ENCODE measurements at regions of chr15 and their contacts with region 1.

Region 1: GRCh38 chr15:60916679-60917460 is 312.2 kb downstream of the RORA start:
- DNase-seq: peak; percentile 75 to 87 (median 82)
- ATAC-seq: peak; percentile 94
- H3K4me3 ChIP-seq: no peak overlapping the region
- H3K27ac ChIP-seq: peak overlapping the region; percentile 14
- H3K4me1 ChIP-seq: peaks cover 0 to 12% of the 10 kb centered on the region in 2 donors
- H3K27me3 ChIP-seq: no peaks in the 10 kb centered on the region
- CTCF ChIP-seq: peak; percentile 76 to 80

Region 2: DNA sequence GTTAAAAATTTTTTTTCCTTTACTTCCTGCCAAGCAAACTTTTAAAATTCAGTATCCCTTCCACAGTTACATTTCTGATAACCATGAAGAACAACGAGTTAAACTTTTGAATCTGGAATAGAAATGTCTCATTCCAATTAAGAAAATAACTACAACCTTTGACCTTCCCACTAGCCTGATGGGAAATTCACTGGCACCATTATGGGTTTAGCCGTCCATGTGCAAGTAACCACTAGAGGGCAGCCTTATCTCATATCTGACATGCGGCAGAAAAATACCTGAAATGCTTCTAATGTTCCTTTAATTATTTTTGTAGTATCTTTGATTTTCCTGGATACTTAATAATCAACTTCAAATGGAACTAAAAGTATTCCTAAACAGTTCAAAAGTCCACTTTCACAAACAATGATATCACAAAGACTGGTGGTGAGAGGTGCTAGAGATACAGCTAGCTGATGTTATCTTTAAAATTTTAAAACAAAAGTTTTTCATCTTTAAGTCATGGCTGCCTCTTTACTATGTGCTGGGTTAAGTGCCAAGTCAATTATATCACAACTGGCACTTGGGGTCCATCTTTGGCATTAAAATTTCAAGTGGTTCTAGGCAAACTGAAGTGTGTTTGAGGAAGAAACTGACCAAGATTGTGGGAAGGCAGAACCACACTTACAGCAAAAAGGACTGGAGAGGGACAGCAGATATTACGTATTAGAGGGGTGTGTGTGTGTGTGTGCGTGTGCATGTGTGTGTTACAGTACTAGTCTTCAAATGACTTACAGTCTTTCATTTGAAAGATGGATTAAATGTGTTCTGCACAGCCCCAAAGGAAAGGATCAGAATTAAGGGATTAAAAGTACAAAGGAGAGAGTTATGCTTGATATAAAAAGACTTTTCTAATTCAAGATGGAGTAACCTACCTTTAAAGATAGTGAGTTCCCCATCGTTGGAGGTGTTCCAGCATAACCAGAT is 330.8 kb before region 1 on chr15:
- intact Hi-C with region 1: loop called in 1 of 2 experiments (anchors 10 kb)
- DNase-seq: peak in 1 of 4 donors; percentile 80
- ATAC-seq: peak; percentile 87
- H3K4me3 ChIP-seq: no peak overlapping the region
- H3K27ac ChIP-seq: no peak overlapping the region
- H3K4me1 ChIP-seq: peaks cover 6 to 26% of the 10 kb centered on the region in 2 donors
- H3K27me3 ChIP-seq: peaks cover 0 to 27% of the 10 kb centered on the region in 2 donors
- CTCF ChIP-seq: peak; percentile 90